Endothelial cell of umbilical vein (primary cell): ENCODE measurements at regions of chr18 and their contacts with region 1.

Region 1: GRCh38 chr18:27674411-27674810 is 489.3 kb upstream of the CHST9 start:
- DNase-seq: no peak
- H3K4me3 ChIP-seq: no peak overlapping the region
- H3K27ac ChIP-seq: no peak overlapping the region
- H3K4me1 ChIP-seq: no peaks in the 10 kb centered on the region
- H3K27me3 ChIP-seq: no peaks in the 10 kb centered on the region
- CTCF ChIP-seq: no peak
- POLR2A ChIP-seq: no peak

Region 2: GRCh38 chr18:27582760-27583412 is 91.5 kb before region 1 on chr18:
- CTCF ChIA-PET with region 1: no interaction called
- POLR2A ChIA-PET with region 1: no interaction called
- dilution Hi-C with region 1: no loop called
- intact Hi-C with region 1: no loop called
- DNase-seq: no peak
- H3K4me3 ChIP-seq: no peak overlapping the region
- H3K27ac ChIP-seq: no peak overlapping the region
- H3K4me1 ChIP-seq: no peaks in the 10 kb centered on the region
- H3K27me3 ChIP-seq: no peaks in the 10 kb centered on the region
- CTCF ChIP-seq: no peak
- POLR2A ChIP-seq: no peak

Region 3: GRCh38 chr18:27616324-27616723 is 58.1 kb before region 1 on chr18:
- CTCF ChIA-PET with region 1: no interaction called
- POLR2A ChIA-PET with region 1: no interaction called
- dilution Hi-C with region 1: no loop called
- intact Hi-C with region 1: loop called (anchors 10 kb)
- DNase-seq: no peak
- H3K4me3 ChIP-seq: no peak overlapping the region
- H3K27ac ChIP-seq: no peak overlapping the region
- H3K4me1 ChIP-seq: no peaks in the 10 kb centered on the region
- H3K27me3 ChIP-seq: peaks cover 0 to 2% of the 10 kb centered on the region in 2 experiments
- CTCF ChIP-seq: no peak
- POLR2A ChIP-seq: no peak

Region 4: DNA sequence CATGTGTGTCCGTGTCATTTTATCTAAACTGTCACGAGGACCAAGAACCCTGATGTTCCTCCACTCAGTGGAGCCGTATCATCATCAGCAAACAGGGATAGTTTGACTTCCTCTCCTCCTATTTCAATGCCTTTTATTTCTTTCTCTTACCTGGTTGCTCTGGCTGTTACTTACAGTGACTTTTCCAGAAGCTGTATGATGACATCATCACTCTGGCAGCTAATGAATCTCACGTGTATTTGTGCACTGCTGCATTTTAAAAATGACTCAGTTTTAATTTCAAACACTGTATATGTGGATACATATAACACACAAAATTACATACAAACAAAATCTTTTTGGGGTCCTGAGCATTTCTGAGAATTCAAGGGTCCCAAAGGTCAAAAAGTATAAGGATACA is 21.1 kb after region 1 on chr18:
- CTCF ChIA-PET with region 1: no interaction called
- POLR2A ChIA-PET with region 1: no interaction called
- dilution Hi-C with region 1: no loop called
- intact Hi-C with region 1: no loop called
- DNase-seq: no peak
- H3K4me3 ChIP-seq: no peak overlapping the region
- H3K27ac ChIP-seq: no peak overlapping the region
- H3K4me1 ChIP-seq: no peaks in the 10 kb centered on the region
- H3K27me3 ChIP-seq: no peaks in the 10 kb centered on the region
- CTCF ChIP-seq: no peak
- POLR2A ChIP-seq: no peak